ENCODE measurements at regions of chr17 and their contacts with region 1.

Region 1: DNA sequence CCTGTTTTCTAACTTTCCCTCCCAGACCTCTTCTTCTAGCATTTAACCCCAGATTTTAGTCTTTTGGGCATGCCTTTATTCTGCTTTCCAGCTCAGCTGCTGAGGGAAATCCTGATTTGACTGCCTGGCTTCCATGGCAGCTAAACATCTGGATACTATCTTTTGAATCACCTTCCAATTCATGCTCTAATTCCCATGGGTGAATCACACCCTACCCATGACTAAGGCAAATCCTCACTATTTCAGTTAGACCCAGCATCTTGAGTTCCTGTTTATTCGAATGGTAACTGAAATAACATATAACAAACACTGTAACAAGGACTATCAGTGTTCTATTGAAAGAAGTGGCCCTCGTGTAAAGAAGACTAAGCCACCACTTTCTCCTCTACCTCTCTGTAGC is 29.8 kb downstream of the CA10 start:
- DNase-seq: no peak
- ATAC-seq: no peak
- H3K4me3 ChIP-seq: no peak overlapping the region
- H3K27ac ChIP-seq: no peak overlapping the region
- H3K4me1 ChIP-seq: no peaks in the 10 kb centered on the region
- H3K27me3 ChIP-seq: no peaks in the 10 kb centered on the region
- CTCF ChIP-seq: no peak
- POLR2A ChIP-seq: no peak

Region 2: DNA sequence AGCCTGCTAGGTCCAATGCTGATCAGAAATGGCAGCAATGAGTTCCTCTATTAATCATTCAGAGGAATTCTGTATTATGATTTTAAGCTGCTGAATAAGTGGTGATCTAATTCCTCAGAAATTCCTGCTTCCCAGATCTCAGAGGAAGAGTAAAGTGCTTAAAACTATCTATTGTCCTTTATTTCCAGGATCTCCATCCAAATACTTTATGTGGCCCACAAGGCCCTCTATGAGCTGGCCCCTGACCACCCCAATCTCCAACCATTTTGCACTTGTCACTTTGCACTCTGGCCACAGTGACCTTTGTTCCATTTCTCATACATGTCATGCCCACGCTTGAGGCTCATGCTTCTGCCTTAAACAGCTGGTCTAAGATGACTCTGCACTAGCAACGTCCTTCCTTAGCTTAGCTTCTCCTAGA is 63.9 kb before region 1 on chr17:
- intact Hi-C with region 1: loop called in 1 of 10 experiments (anchors 10 kb)
- DNase-seq: no peak
- ATAC-seq: no peak
- H3K4me3 ChIP-seq: no peak overlapping the region
- H3K27ac ChIP-seq: no peak overlapping the region
- H3K4me1 ChIP-seq: no peaks in the 10 kb centered on the region
- H3K27me3 ChIP-seq: no peaks in the 10 kb centered on the region
- CTCF ChIP-seq: no peak
- POLR2A ChIP-seq: no peak

Region 3: GRCh38 chr17:52181782-52182181 is 53.1 kb after region 1 on chr17:
- intact Hi-C with region 1: no loop called
- DNase-seq: no peak
- ATAC-seq: no peak
- H3K4me3 ChIP-seq: no peak overlapping the region
- H3K27ac ChIP-seq: no peak overlapping the region
- H3K4me1 ChIP-seq: no peaks in the 10 kb centered on the region
- H3K27me3 ChIP-seq: peaks cover 0 to 3% (median 0%) of the 10 kb centered on the region in 9 donors
- CTCF ChIP-seq: no peak
- POLR2A ChIP-seq: no peak

Measured in heart left ventricle (tissue), 16 donors.